Naive thymus-derived CD4-positive, alpha-beta T cell (primary cell): ENCODE measurements at regions of chr11 and their contacts with region 1.

Region 1: DNA sequence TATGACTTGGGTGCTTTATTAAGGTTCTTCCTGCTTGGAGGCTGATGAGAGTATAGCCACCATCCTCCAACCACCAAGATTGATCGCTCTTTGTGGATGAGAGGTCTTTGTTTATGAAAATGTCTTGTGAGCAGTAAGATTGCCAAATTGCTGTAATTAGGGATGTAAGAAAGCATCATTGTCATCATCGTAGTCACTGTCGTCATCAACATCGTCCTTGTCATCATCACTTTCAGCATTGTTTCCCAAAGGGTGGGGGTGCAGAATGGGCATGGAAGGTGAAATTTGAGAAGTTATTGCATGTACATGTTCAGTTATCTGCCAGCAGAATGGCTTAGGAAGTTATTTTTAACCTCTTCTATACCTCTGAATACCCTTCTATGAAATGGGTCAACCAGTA is 439.4 kb upstream of the TENM4 start:
- DNase-seq: no peak
- ATAC-seq: no peak
- H3K4me3 ChIP-seq: no peak overlapping the region
- H3K4me3 Mint-ChIP-seq: no peak overlapping the region
- H3K27ac ChIP-seq: no peak overlapping the region
- H3K27ac Mint-ChIP-seq: no peak overlapping the region
- H3K4me1 ChIP-seq: no peaks in the 10 kb centered on the region
- H3K4me1 Mint-ChIP-seq: no peaks in the 10 kb centered on the region
- H3K27me3 ChIP-seq: no peaks in the 10 kb centered on the region
- H3K27me3 Mint-ChIP-seq: peaks cover 0 to 6% (median 0%) of the 10 kb centered on the region in 5 donors

Region 2: DNA sequence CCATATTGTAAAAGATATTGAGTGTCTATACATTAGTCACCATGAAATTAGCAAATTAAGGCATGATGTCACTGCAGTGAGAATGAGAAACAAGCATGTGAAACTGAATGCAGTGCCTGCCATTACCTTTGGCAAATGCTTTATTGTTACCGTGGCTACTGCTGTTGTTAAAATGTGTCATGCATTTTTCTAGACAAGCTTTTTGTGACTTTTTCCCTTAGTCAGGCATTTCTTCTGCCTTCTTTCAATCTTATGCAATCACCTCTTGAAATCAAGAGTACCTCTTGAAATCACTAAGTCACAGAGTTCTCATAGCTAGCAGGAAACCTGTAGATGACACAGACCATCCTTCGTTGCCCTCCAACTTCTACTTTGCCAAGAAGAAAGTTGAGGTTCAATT is 22.2 kb after region 1 on chr11:
- CTCF ChIA-PET with region 1: no interaction called
- POLR2A ChIA-PET with region 1: no interaction called
- intact Hi-C with region 1: loop called in 1 of 2 experiments (anchors 1 kb)
- DNase-seq: no peak
- ATAC-seq: no peak
- H3K4me3 ChIP-seq: no peak overlapping the region
- H3K4me3 Mint-ChIP-seq: no peak overlapping the region
- H3K27ac ChIP-seq: no peak overlapping the region
- H3K27ac Mint-ChIP-seq: no peak overlapping the region
- H3K4me1 ChIP-seq: no peaks in the 10 kb centered on the region
- H3K4me1 Mint-ChIP-seq: no peaks in the 10 kb centered on the region
- H3K27me3 ChIP-seq: no peaks in the 10 kb centered on the region
- H3K27me3 Mint-ChIP-seq: no peaks in the 10 kb centered on the region